ENCODE measurements at regions of chr9 and their contacts with region 1.

Region 1: DNA sequence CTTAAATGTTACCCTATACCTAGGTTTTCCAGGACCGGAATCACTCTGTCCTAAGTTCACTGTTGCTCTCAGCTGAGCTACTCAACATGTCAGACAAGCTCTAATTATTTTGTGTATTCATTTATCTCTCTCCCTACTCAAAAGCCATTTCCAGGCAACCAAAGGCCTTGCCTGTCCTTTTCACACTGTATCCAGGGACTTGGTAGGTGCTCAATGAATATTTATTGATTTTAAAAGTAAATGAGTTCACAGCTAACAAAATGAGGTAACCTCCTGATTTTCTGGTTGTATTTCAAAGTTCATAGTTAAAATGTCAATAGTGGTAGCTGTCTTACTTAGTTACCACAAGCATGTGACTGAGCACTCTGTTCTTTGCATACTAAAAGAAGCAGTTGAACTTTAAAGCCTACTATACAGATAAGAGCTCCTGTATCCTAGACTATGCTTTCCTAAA is 522.2 kb downstream of the ACTL7B start:
- DNase-seq: no peak
- H3K27ac ChIP-seq: no peak overlapping the region
- CTCF ChIP-seq: no peak

Region 2: GRCh38 chr9:107480386-107480789 is 853.2 kb before region 1 on chr9:
- CTCF ChIA-PET with region 1: interaction called, 10 read pairs
- POLR2A ChIA-PET with region 1: no interaction called
- DNase-seq: peak; percentile 82
- H3K27ac ChIP-seq: peak overlapping the region; percentile 85
- CTCF ChIP-seq: no peak

Region 3: DNA sequence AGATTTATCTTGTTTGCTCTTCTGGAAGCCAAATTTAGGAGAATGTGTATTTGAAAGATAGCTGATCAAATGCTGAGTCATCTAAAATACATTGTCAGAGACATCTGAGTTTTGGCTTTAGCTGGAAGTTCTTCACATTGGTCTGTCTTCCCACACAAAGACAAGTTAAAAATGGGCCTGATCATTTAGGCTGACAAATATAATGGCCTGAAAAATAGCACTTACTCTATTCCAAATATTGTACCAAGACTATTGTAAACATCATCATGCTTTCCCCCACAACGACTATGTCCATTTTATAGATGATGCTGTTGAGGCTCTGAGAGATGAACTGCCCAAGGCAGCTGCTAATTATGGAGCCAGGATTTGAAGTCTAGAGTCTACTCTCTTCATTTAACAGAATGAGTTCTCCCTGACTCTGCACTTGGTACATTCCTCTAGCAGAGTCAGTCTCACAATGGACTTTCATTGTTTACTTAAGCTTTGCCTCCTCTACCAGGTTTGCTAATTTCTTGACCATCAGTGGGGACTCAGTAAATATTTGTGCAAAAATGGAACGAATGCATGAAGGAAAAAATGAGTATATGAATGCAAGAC is 224.6 kb before region 1 on chr9:
- CTCF ChIA-PET with region 1: no interaction called
- POLR2A ChIA-PET with region 1: no interaction called
- DNase-seq: no peak
- H3K27ac ChIP-seq: no peak overlapping the region
- CTCF ChIP-seq: no peak

Region 4: GRCh38 chr9:108400297-108401064 is 66.9 kb after region 1 on chr9:
- CTCF ChIA-PET with region 1: no interaction called
- POLR2A ChIA-PET with region 1: no interaction called
- DNase-seq: no peak
- H3K27ac ChIP-seq: no peak overlapping the region
- CTCF ChIP-seq: 0 out of 2 replicates have a peak, but pooled peaks have one; percentile 0